ENCODE measurements at regions of chr6 and their contacts with region 1.

Region 1: GRCh38 chr6:43506667-43507471 is 3.3 kb downstream of the LRRC73 start:
- DNase-seq: peak in 4 of 5 donors; percentile 85 to 89 (median 88)
- H3K4me3 ChIP-seq: no peak overlapping the region
- H3K27ac ChIP-seq: no peak overlapping the region
- H3K4me1 ChIP-seq: peaks cover 0 to 16% (median 4%) of the 10 kb centered on the region in 3 donors
- H3K27me3 ChIP-seq: no peaks in the 10 kb centered on the region
- CTCF ChIP-seq: peak; percentile 97

Region 2: DNA sequence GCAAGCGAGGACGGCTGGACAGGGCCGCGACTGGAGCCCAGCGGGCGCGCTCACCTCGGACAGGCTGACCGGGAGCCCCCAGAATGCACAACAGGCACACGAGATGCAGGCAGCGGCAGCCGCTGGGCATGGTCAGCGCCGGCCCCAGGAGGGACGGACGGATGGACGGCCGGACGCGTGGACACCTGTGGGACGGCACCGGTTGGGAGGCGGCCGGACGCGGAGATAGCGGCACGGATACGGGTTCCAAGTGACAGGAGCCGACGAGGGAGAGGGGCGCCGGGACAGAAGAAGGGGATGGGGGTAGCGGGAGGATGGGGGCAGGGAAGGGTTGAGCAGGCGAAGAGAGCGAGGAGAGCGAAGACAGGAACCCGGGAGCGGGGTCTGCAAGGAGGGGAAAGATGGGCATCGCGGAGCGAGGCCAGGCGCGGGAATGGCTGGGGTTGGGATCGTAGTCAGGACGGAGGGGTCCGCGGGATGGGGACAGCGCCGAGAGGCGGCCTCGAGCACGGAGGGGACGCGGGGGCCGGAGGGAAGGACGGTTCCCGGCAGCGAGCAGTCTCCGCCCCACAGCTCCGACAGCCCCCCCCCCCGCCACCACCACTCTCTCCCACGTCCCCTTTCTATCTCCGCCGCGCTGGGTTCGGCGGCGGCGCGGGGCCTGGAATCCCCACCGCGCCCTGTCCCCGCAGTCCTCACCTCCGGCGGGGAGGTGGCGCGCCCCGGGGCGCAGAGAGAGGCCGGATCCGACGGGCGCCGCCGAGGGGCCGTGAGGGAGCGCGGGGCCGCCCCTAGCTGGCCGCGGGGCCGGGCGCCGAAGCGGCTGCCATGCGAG is 52.0 kb before region 1 on chr6:
- intact Hi-C with region 1: loop called (anchors 10 kb)
- DNase-seq: peak; percentile 81 to 95 (median 89)
- H3K4me3 ChIP-seq: peak overlapping the region in 1 of 3 donors; percentile 51
- H3K27ac ChIP-seq: no peak overlapping the region
- H3K4me1 ChIP-seq: peaks cover 0 to 6% (median 0%) of the 10 kb centered on the region in 3 donors
- H3K27me3 ChIP-seq: peaks cover 3% of the 10 kb centered on the region
- CTCF ChIP-seq: no peak

Measured in kidney (tissue), 22 donors.